BJ (cell line): ENCODE measurements at regions of chr17 and their contacts with region 1.

Region 1: GRCh38 chr17:34314279-34314678 is 5.0 kb upstream of the CCL8 start:
- DNase-seq: peak; percentile 31
- H3K4me3 ChIP-seq: no peak overlapping the region
- H3K27me3 ChIP-seq: no peaks in the 10 kb centered on the region
- CTCF ChIP-seq: no peak

Region 2: GRCh38 chr17:34110315-34110714 is 204.0 kb before region 1 on chr17:
- CTCF ChIA-PET with region 1: no interaction called
- POLR2A ChIA-PET with region 1: no interaction called
- DNase-seq: no peak
- H3K4me3 ChIP-seq: no peak overlapping the region
- H3K27me3 ChIP-seq: no peaks in the 10 kb centered on the region
- CTCF ChIP-seq: no peak

Region 3: DNA sequence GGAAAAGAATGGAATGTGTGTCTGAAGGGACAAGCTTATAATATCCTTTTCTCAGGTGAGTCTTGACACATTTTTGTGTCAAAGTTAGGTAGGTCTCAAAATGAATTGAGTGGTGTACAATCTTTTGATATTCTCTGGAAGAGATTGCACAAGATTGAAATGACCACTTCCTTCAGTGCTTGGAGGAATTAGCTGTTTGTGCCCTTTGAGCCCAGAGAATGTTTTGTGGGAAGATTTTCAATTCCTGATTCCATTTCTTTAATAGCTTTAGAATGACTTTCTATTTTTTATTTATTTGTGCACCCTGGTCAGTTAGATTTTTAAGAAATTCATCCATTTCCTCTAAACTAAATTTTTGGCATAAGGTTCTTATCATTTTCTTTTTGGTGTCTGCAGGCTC is 40.4 kb after region 1 on chr17:
- CTCF ChIA-PET with region 1: interaction called, 148 read pairs
- POLR2A ChIA-PET with region 1: interaction called, 3 read pairs
- DNase-seq: peak; percentile 68
- H3K4me3 ChIP-seq: no peak overlapping the region
- H3K27me3 ChIP-seq: no peaks in the 10 kb centered on the region
- CTCF ChIP-seq: no peak

Region 4: DNA sequence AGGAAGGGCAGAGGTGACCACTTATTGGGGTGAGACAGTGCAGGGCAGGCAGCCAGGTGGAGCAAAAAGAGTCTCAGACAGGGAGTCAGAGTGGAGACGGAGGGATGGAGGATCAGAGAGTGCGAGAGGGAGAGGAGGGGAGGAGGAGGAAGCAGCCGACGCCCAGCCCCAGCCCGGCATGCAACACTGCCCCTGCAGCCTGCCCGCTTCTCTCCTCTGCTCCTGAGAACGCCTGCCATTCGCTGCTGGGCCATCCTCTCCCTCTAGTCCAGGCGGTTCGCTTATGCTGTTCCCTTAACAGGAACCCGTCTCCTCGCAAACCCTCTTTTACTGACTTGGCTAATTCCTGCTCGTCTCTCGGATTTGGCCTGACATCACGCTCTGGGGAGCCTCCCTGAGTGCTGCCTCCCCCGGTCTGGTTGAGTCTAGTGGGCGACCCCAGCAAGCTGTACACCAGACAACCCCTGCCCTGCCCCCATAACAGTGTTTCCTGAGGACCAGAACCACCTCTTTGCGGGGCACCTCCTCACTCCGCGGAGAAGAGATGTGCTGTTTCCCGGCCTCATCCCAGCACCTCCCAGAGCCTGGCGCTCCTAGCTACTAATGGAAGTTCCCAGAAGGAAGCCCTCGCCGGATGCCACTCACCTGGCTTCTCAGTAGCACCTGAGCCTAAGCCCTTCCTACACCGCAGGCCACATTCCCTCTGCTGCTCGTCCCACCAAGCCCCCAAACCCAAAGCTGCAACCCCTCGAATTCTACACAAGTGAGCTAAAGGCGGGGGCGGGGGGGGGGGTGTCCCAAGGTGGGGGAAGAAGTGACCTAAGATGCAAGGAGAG is 109.9 kb after region 1 on chr17:
- CTCF ChIA-PET with region 1: no interaction called
- POLR2A ChIA-PET with region 1: no interaction called
- DNase-seq: no peak
- H3K4me3 ChIP-seq: no peak overlapping the region
- H3K27me3 ChIP-seq: peaks cover 16% of the 10 kb centered on the region
- CTCF ChIP-seq: no peak